MCF 10A (cell line): ENCODE measurements at regions of chr3 and their contacts with region 1.

Region 1: GRCh38 chr3:194481103-194481502 is 5.7 kb downstream of the ATP13A3 start:
- DNase-seq: peak; percentile 65
- H3K4me3 Mint-ChIP-seq: no peak overlapping the region
- H3K27ac Mint-ChIP-seq: peak overlapping the region; percentile 85
- H3K4me1 Mint-ChIP-seq: peaks cover 27% of the 10 kb centered on the region
- H3K27me3 Mint-ChIP-seq: no peaks in the 10 kb centered on the region
- CTCF ChIP-seq: no peak

Region 2: GRCh38 chr3:194583604-194584318 is 102.7 kb after region 1 on chr3:
- CTCF ChIA-PET with region 1: interaction called, 5 read pairs
- POLR2A ChIA-PET with region 1: interaction called, 31 read pairs
- intact Hi-C with region 1: no loop called
- DNase-seq: peak; percentile 89
- H3K4me3 Mint-ChIP-seq: peak overlapping the region; percentile 96
- H3K27ac Mint-ChIP-seq: peak overlapping the region; percentile 96
- H3K4me1 Mint-ChIP-seq: peaks cover 20% of the 10 kb centered on the region
- H3K27me3 Mint-ChIP-seq: no peaks in the 10 kb centered on the region
- CTCF ChIP-seq: no peak